HEK293 (cell line): ENCODE measurements at regions of chr18 and their contacts with region 1.

Region 1: GRCh38 chr18:46281185-46282176 is 177.3 kb downstream of the HAUS1 start:
- H3K4me3 ChIP-seq: no peak overlapping the region
- H3K27ac ChIP-seq: no peak overlapping the region
- H3K4me1 ChIP-seq: no peaks in the 10 kb centered on the region; the same call in 1 of the 2 replicates
- CTCF ChIP-seq: peak; percentile 44; the same call in 1 of the 2 replicates

Region 2: GRCh38 chr18:46264235-46264893 is 17.1 kb before region 1 on chr18:
- CTCF ChIA-PET with region 1: interaction called, 13 read pairs
- POLR2A ChIA-PET with region 1: no interaction called
- H3K4me3 ChIP-seq: no peak overlapping the region
- H3K27ac ChIP-seq: no peak overlapping the region
- H3K4me1 ChIP-seq: peaks cover 3% of the 10 kb centered on the region; the same call in 1 of the 2 replicates
- CTCF ChIP-seq: no peak

Region 3: GRCh38 chr18:46333431-46334135 is 52.1 kb after region 1 on chr18:
- CTCF ChIA-PET with region 1: interaction called, 13 read pairs
- POLR2A ChIA-PET with region 1: no interaction called
- H3K4me3 ChIP-seq: peak overlapping the region; percentile 56
- H3K27ac ChIP-seq: peak overlapping the region; percentile 64; the same call in 1 of the 2 replicates
- H3K4me1 ChIP-seq: peaks cover 12% of the 10 kb centered on the region
- CTCF ChIP-seq: peak; percentile 34

Region 4: DNA sequence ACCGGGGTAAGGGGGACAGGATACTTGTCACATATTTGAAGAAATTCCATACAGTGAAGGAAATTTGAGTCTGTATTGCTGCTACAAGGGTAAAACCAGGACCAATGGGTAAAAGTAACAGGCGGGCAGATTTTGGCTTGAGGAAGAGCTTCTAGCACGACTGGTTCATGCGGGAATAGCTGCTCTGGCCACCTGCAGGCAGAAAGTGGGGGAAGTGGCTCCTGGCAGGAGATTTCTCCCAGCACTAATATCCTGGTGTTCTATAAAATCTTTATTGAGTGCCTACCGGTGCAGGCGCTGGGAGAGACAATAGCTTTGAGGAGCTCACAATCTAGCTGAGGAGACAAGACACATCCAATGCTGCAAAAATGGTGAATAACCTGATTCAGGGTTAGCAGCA is 177.0 kb after region 1 on chr18:
- CTCF ChIA-PET with region 1: interaction called, 11 read pairs
- POLR2A ChIA-PET with region 1: no interaction called
- H3K4me3 ChIP-seq: no peak overlapping the region
- H3K27ac ChIP-seq: no peak overlapping the region
- H3K4me1 ChIP-seq: no peaks in the 10 kb centered on the region
- CTCF ChIP-seq: 0 out of 2 replicates have a peak, but pooled peaks have one; percentile 12

Region 5: GRCh38 chr18:46622999-46623398 is 341.5 kb after region 1 on chr18:
- CTCF ChIA-PET with region 1: interaction called, 62 read pairs
- POLR2A ChIA-PET with region 1: no interaction called
- H3K4me3 ChIP-seq: no peak overlapping the region
- H3K27ac ChIP-seq: no peak overlapping the region
- H3K4me1 ChIP-seq: no peaks in the 10 kb centered on the region
- CTCF ChIP-seq: no peak